Activated CD8-positive, alpha-beta memory T cell treated with anti-CD3 and anti-CD28 coated beads, Interleukin-2, amount 10 ng/mL, durations not matched to agents 7 days and 5 days (primary cell): ENCODE measurements at regions of chr4 and their contacts with region 1.

Region 1: DNA sequence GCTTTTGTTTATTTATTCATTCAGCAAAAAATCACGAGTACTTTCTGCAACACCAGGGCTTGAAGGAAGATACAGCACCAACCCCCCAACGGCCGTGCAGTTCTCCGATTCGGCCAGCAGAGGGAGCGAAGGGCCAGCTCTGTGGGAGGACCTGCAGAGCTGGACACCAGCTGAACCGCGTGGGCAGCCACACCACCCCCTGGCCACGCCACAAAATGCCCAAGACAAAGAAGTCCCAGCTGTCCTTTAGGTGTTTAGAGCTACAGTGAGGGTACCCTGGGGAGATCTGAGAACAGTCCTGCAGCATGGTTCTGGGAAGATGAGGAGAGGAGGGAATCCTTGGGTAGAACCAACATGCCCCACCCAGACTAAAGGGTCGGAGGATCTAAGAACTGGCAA is 83.1 kb downstream of the RELL1 start:
- DNase-seq: peak; percentile 85
- ATAC-seq: peak; percentile 59
- H3K4me3 Mint-ChIP-seq: no peak overlapping the region
- H3K27ac Mint-ChIP-seq: peak overlapping the region; percentile 6
- H3K4me1 Mint-ChIP-seq: peaks cover 65% of the 10 kb centered on the region
- H3K27me3 Mint-ChIP-seq: no peaks in the 10 kb centered on the region

Region 2: GRCh38 chr4:37490391-37491347 is 112.4 kb before region 1 on chr4:
- CTCF ChIA-PET with region 1: no interaction called
- DNase-seq: no peak
- ATAC-seq: no peak
- H3K4me3 Mint-ChIP-seq: no peak overlapping the region
- H3K27ac Mint-ChIP-seq: no peak overlapping the region
- H3K4me1 Mint-ChIP-seq: no peaks in the 10 kb centered on the region
- H3K27me3 Mint-ChIP-seq: peaks cover 12% of the 10 kb centered on the region

Region 3: DNA sequence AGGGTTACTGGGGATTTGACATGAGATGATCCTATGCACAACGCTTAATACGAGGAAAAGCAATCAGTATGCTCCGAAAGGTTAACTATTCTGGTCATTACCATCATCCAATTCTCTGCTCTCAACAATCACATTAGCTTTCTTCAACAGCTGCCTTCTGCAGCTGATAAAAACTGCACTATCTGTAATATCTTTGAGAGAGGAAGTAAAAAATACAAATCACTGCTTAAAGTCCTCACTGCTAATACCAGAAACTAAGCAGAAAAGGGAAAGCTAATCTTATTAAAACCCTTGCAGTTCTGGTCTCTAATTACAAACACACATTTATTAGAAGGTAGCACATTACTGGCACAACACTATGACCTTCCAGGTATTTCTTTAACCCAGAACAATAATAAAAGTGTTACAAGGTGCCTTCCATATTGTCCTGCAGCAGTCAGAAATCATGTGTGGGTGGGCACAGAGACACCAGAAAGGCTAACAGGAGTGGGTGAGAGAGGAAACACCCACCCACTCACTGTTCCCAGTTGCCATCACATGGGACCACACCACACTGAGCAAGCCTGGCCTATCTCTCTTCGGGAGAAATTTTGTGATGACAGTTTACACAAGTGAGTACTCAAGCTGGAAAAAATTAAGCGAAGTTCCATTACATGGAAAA is 12.1 kb after region 1 on chr4:
- CTCF ChIA-PET with region 1: interaction called, 28 read pairs
- DNase-seq: no peak
- ATAC-seq: no peak
- H3K4me3 Mint-ChIP-seq: no peak overlapping the region
- H3K27ac Mint-ChIP-seq: no peak overlapping the region
- H3K4me1 Mint-ChIP-seq: peaks cover 2% of the 10 kb centered on the region
- H3K27me3 Mint-ChIP-seq: no peaks in the 10 kb centered on the region

Region 4: DNA sequence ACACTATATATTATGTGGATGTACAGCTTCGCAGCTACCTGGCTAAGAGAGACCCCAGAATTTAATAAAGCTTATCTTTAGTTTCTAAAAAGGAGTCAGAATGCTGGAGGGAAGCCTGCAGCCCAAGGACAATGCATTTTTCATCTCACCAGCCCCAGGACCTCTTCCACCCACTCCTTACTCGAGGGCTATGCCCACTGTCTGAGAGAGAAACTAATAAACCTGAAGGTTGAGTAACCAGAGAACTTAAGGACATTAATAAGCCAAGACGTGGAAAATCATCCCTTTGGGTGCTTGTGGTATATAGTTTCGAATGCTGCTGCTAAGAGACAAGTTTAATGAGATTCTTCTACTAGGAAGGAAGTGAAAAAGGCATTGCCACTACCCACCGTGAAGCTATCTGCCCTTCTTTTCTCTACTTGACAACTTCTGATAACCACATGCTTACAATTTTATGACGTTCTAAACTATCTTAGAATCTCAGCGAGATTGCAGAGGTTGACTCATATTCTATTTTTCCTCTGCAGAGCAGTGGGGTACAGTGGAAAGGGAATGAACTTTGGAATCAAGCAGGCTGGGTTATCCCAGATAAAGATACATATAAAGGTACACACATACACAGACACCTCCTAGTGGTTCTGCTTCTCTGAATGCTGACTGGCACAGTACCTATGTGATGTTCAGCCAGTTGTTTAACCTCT is 79.8 kb after region 1 on chr4:
- CTCF ChIA-PET with region 1: interaction called, 23 read pairs
- DNase-seq: peak; percentile 45
- ATAC-seq: no peak
- H3K4me3 Mint-ChIP-seq: peak overlapping the region; percentile 65
- H3K27ac Mint-ChIP-seq: peak overlapping the region; percentile 80
- H3K4me1 Mint-ChIP-seq: peaks cover 55% of the 10 kb centered on the region
- H3K27me3 Mint-ChIP-seq: no peaks in the 10 kb centered on the region

Region 5: DNA sequence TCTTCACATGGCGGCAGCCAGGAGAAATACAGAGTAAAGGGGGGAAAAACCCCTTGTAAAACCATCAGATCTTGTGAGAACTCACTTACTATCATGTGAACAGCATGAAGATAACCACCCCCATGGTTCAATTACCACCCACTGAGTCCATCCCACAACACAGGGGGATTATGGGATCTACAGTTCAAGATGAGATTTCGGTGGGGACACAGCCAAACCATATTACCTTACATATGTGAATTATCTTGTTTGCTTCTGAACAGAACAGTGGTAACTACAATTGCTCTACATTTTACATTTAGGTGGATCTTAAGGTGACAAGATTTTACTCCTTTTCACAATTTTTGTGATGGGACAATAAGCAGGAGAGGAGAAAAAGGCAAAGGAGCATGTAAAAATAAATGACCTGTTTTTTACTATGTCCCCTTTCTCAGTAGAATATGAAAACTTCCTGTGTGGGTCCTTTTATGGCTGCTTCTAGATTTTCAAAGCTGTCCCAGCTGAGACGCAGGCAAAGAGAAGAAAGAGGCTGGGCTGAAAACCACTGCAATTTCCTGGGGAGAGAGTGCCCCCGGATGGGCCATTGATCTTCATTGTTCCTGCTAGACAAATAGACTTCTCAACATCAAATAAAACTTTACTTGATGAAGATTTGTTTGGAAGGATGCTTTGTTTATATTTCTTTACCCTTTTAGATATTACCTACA is 177.5 kb after region 1 on chr4:
- CTCF ChIA-PET with region 1: interaction called, 10 read pairs
- DNase-seq: peak; percentile 68
- ATAC-seq: peak; percentile 78
- H3K4me3 Mint-ChIP-seq: no peak overlapping the region
- H3K27ac Mint-ChIP-seq: no peak overlapping the region
- H3K4me1 Mint-ChIP-seq: peaks cover 16% of the 10 kb centered on the region
- H3K27me3 Mint-ChIP-seq: no peaks in the 10 kb centered on the region